WTC11 (cell line): ENCODE measurements at regions of chr7 and their contacts with region 1.

Region 1: DNA sequence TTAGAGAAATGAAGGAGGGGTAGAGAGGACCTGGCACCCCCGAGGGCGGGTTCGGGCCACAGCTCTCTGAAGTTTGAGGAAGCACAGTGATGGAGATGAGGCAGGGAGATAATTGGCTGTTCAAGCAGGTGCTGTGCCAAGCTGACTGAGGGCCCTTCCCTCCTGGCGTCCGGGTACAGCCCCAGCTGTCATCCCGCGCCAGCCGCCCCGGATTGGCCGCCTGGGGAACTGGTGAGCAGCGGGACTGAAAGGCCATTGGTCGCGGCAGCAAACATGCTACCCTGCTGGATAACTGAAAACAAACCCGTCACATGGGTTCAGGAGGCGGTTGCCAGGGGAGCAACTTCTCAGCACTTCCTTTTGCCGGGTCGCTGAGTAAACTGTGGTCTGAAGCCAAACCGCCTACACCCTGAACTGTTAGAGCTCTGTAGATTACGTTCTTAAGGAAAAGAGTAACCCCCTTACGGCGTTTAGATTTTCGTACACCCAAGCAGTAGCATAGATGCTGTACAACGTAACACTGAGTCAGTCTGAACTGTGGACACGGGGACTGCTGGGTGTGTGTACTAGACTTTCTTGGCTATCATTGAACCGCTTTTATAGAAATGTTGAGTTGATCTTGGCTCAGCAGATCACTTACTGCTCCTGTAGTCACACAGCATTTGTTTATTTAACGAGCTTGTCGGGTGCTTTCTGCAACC is 1.3 kb downstream of the INSIG1 start:
- DNase-seq: peak; percentile 88
- ATAC-seq: peak; percentile 76
- H3K4me3 Mint-ChIP-seq: peak overlapping the region; percentile 86
- H3K27ac Mint-ChIP-seq: peak overlapping the region; percentile 96
- H3K4me1 Mint-ChIP-seq: peaks cover 50% of the 10 kb centered on the region
- H3K27me3 Mint-ChIP-seq: no peaks in the 10 kb centered on the region
- CTCF ChIP-seq: no peak

Region 2: GRCh38 chr7:155108144-155108901 is 190.7 kb before region 1 on chr7:
- CTCF ChIA-PET with region 1: no interaction called
- POLR2A ChIA-PET with region 1: no interaction called
- DNase-seq: no peak
- ATAC-seq: peak; percentile 82
- H3K4me3 Mint-ChIP-seq: no peak overlapping the region
- H3K27ac Mint-ChIP-seq: no peak overlapping the region; the same call in 1 of the 2 replicates
- H3K4me1 Mint-ChIP-seq: peaks cover 22% of the 10 kb centered on the region
- H3K27me3 Mint-ChIP-seq: no peaks in the 10 kb centered on the region; the same call in 1 of the 2 replicates
- CTCF ChIP-seq: no peak

Region 3: DNA sequence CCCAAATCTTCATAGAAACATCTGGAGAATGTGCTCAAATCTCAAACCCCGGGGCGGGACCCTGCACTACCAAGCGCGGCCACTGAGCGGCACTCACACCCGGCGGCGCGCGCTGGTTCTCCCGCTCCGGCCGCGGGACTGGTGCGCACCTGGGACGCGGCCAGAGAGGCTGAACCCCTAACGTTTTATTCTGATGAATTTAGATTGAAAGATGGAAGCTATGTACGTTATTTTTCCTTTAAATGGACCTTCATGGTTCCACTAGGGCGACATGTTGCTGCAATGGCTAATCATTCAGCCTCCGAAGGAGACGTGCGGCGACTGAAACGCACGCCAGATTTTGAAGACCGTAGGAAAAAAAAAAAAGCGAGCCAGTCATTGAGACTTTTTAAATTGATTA is 108.3 kb before region 1 on chr7:
- CTCF ChIA-PET with region 1: interaction called, 18 read pairs
- POLR2A ChIA-PET with region 1: no interaction called
- DNase-seq: peak; percentile 82
- ATAC-seq: peak; percentile 81
- H3K4me3 Mint-ChIP-seq: peak overlapping the region; percentile 43
- H3K27ac Mint-ChIP-seq: no peak overlapping the region
- H3K4me1 Mint-ChIP-seq: peaks cover 5% of the 10 kb centered on the region
- H3K27me3 Mint-ChIP-seq: peaks cover 12% of the 10 kb centered on the region
- CTCF ChIP-seq: peak; percentile 92

Region 4: DNA sequence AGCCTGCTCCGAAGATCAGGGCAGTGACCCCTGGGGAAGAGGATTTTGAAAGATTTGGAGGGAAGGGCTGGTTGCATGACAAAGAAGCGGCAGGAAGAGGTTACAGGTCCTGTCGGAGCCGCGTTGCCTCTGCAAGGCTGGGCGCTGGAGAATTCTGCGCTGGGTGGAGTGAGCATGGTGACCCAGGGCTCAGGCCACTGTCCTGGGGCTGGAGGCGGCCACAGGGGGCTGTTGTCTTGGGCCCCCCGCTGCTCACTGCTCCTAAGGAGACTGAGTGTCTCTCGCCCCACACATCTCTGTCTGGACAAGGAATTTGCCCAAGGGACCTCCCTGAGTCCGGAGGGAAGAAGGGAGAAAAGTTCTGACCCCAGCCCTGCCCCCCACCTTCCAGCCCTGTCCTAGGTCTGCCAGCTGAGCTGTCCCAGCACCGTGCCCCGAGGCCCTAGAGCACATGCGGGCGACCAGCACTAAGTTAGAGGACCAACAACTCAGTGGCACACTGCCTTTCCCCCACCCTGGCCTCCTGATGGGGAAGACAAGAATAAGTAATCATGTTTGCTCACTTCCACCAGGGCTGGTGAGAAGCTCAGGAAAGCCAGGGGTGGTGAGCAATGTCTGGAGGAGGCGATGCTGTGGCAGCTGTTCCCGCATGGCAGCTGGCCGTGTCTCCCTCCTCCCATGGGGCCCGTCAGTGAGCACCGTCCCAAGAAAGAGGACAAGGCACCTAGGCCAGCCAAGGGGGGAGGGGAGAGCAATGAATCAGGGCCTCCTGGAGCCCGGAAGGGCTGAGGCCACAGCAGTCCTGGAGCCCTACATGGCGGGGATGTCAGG is 70.8 kb before region 1 on chr7:
- CTCF ChIA-PET with region 1: interaction called, 10 read pairs
- POLR2A ChIA-PET with region 1: interaction called, 5 read pairs
- DNase-seq: peak; percentile 41
- ATAC-seq: peak; percentile 74
- H3K4me3 Mint-ChIP-seq: no peak overlapping the region
- H3K27ac Mint-ChIP-seq: no peak overlapping the region
- H3K4me1 Mint-ChIP-seq: peaks cover 51% of the 10 kb centered on the region
- H3K27me3 Mint-ChIP-seq: peaks cover 35% of the 10 kb centered on the region
- CTCF ChIP-seq: no peak

Region 5: GRCh38 chr7:155278916-155279315 is 20.1 kb before region 1 on chr7:
- CTCF ChIA-PET with region 1: no interaction called
- POLR2A ChIA-PET with region 1: no interaction called
- DNase-seq: no peak
- ATAC-seq: no peak
- H3K4me3 Mint-ChIP-seq: no peak overlapping the region
- H3K27ac Mint-ChIP-seq: no peak overlapping the region
- H3K4me1 Mint-ChIP-seq: peaks cover 20% of the 10 kb centered on the region
- H3K27me3 Mint-ChIP-seq: no peaks in the 10 kb centered on the region
- CTCF ChIP-seq: no peak

Region 6: GRCh38 chr7:155344600-155345433 is 45.8 kb after region 1 on chr7:
- CTCF ChIA-PET with region 1: interaction called, 17 read pairs
- POLR2A ChIA-PET with region 1: no interaction called
- DNase-seq: peak; percentile 82
- ATAC-seq: peak; percentile 86
- H3K4me3 Mint-ChIP-seq: peak overlapping the region; percentile 60
- H3K27ac Mint-ChIP-seq: no peak overlapping the region
- H3K4me1 Mint-ChIP-seq: no peaks in the 10 kb centered on the region
- H3K27me3 Mint-ChIP-seq: peaks cover 11% of the 10 kb centered on the region
- CTCF ChIP-seq: peak; percentile 97

Region 7: DNA sequence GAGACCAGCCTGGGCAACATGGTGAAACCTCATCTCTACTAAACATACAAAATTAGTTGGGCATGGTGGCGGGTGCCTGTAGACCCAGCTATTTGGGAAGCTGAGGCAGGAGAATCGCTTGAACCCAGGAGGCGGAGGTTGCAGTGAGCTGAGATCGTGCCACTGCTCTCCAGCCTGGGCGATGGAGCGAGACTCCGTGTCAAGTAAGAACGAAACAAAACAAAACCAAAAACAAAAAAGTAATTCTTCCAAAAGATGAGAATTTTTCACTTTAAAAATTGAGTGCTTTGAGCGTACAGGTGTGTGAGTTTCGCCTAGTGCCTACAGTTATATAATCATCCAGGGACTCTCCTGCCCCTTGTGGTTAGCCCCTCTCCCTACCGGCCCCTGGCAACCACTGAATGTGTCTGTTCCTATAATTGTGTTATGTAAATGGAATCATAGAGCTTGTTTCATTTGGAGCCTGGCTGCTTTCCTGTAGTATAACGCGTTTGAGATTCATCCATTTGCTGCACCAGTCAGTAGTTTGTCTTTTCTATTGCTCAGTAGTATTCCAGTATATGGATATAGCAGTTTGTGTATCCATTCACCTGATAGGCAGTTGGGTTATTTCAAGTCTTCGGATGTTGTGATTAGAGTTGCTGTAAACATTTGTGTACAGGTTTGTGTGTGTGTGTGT is 425.5 kb after region 1 on chr7:
- CTCF ChIA-PET with region 1: no interaction called
- POLR2A ChIA-PET with region 1: no interaction called
- DNase-seq: peak; percentile 35
- ATAC-seq: peak; percentile 90
- H3K4me3 Mint-ChIP-seq: no peak overlapping the region
- H3K27ac Mint-ChIP-seq: no peak overlapping the region
- H3K4me1 Mint-ChIP-seq: peaks cover 13% of the 10 kb centered on the region
- H3K27me3 Mint-ChIP-seq: no peaks in the 10 kb centered on the region
- CTCF ChIP-seq: 0 out of 2 replicates have a peak, but pooled peaks have one; percentile 10